ENCODE measurements at regions of chr4 and their contacts with region 1.

Region 1: GRCh38 chr4:140851032-140851636 is 94.9 kb upstream of the TBC1D9 start:
- DNase-seq: peak; percentile 69
- H3K4me3 ChIP-seq: no peak overlapping the region
- H3K27ac ChIP-seq: no peak overlapping the region
- H3K4me1 ChIP-seq: no peaks in the 10 kb centered on the region
- H3K27me3 ChIP-seq: peaks cover 2 to 9% of the 10 kb centered on the region in 2 experiments
- CTCF ChIP-seq: peak; percentile 65 to 69
- POLR2A ChIP-seq: no peak

Region 2: GRCh38 chr4:139509727-139510410 is 1341.3 kb before region 1 on chr4:
- CTCF ChIA-PET with region 1: no interaction called
- POLR2A ChIA-PET with region 1: no interaction called
- dilution Hi-C with region 1: no loop called
- intact Hi-C with region 1: no loop called
- DNase-seq: peak; percentile 45
- H3K4me3 ChIP-seq: no peak overlapping the region
- H3K27ac ChIP-seq: no peak overlapping the region
- H3K4me1 ChIP-seq: peaks cover 7% of the 10 kb centered on the region
- H3K27me3 ChIP-seq: no peaks in the 10 kb centered on the region
- CTCF ChIP-seq: peak; percentile 16 to 38
- POLR2A ChIP-seq: no peak

Region 3: GRCh38 chr4:140427106-140427961 is 423.8 kb before region 1 on chr4 and contains the start of gene CLGN:
- CTCF ChIA-PET with region 1: interaction called, 27 read pairs
- POLR2A ChIA-PET with region 1: no interaction called
- dilution Hi-C with region 1: no loop called
- intact Hi-C with region 1: loop called (anchors 1 kb)
- DNase-seq: peak; percentile 78
- H3K4me3 ChIP-seq: peak within 1 kb of the TSS; percentile 30 to 64 (median 48)
- H3K27ac ChIP-seq: no peak within 1 kb of the TSS
- H3K4me1 ChIP-seq: peaks cover 9% of the 10 kb centered on the region
- H3K27me3 ChIP-seq: peaks cover 14 to 34% of the 10 kb centered on the region in 2 experiments
- CTCF ChIP-seq: peak; percentile 58 to 68
- POLR2A ChIP-seq: no peak
- total RNA-seq, gene CLGN: 0.60 and 1.00 TPM in 2 replicates

Region 4: GRCh38 chr4:140595065-140595464 is 256.1 kb before region 1 on chr4:
- CTCF ChIA-PET with region 1: interaction called, 49 read pairs
- POLR2A ChIA-PET with region 1: no interaction called
- dilution Hi-C with region 1: no loop called
- intact Hi-C with region 1: loop called (anchors 1 kb)
- DNase-seq: peak; percentile 21
- H3K4me3 ChIP-seq: no peak overlapping the region
- H3K27ac ChIP-seq: no peak overlapping the region
- H3K4me1 ChIP-seq: no peaks in the 10 kb centered on the region
- H3K27me3 ChIP-seq: peaks cover 6 to 19% of the 10 kb centered on the region in 2 experiments
- CTCF ChIP-seq: peak; percentile 35 to 47
- POLR2A ChIP-seq: no peak

Region 5: GRCh38 chr4:140626661-140627376 is 224.3 kb before region 1 on chr4:
- CTCF ChIA-PET with region 1: interaction called, 18 read pairs
- POLR2A ChIA-PET with region 1: no interaction called
- dilution Hi-C with region 1: no loop called
- intact Hi-C with region 1: loop called (anchors 1 kb)
- DNase-seq: peak; percentile 59
- H3K4me3 ChIP-seq: no peak overlapping the region
- H3K27ac ChIP-seq: no peak overlapping the region
- H3K4me1 ChIP-seq: no peaks in the 10 kb centered on the region
- H3K27me3 ChIP-seq: no peaks in the 10 kb centered on the region
- CTCF ChIP-seq: no peak
- POLR2A ChIP-seq: no peak

Region 6: DNA sequence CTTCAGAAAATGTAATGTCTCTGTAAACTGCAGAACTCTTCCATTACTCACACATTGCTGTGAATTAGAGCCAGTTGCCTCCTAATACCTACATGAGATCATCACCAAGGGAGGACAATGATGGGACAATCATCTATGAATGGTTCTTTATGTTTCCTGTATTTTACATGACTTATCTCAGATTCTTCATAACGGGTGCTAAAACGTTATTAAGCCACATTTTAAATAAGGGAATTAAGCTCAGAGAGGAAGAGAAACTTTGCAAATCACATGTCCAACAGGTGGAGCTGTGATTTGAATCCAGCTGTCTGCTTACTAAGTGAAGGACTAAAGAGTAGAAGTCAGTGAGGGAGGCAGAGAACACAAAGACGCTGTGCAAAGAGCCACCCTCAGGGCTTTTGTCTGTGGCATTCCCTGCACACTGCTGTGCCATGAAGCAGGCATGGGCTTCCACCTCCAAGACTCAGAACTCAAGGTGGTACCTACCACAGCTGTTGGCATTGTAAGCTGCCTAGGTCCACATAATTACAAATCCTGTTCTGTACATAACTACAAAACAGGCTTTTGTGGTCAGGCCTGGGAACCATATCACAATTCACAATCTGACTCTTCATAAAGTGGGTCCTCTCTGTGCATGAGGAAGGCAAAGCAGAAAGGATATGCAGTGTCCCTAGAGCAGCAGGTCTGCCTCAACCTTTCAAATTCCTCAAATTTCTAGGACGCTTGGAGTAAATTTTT is 107.8 kb before region 1 on chr4:
- CTCF ChIA-PET with region 1: interaction called, 12 read pairs
- POLR2A ChIA-PET with region 1: no interaction called
- dilution Hi-C with region 1: no loop called
- intact Hi-C with region 1: no loop called
- DNase-seq: peak; percentile 59
- H3K4me3 ChIP-seq: no peak overlapping the region
- H3K27ac ChIP-seq: peak overlapping the region; percentile 15
- H3K4me1 ChIP-seq: peaks cover 20% of the 10 kb centered on the region
- H3K27me3 ChIP-seq: no peaks in the 10 kb centered on the region
- CTCF ChIP-seq: peak in 1 of 2 donors; percentile 26
- POLR2A ChIP-seq: no peak

Region 7: GRCh38 chr4:140884431-140885058 is 33.4 kb after region 1 on chr4:
- CTCF ChIA-PET with region 1: interaction called, 11 read pairs
- POLR2A ChIA-PET with region 1: no interaction called
- dilution Hi-C with region 1: no loop called
- intact Hi-C with region 1: no loop called
- DNase-seq: peak; percentile 68
- H3K4me3 ChIP-seq: no peak overlapping the region
- H3K27ac ChIP-seq: no peak overlapping the region
- H3K4me1 ChIP-seq: no peaks in the 10 kb centered on the region
- H3K27me3 ChIP-seq: peaks cover 8 to 10% of the 10 kb centered on the region in 2 experiments
- CTCF ChIP-seq: peak; percentile 65 to 74
- POLR2A ChIP-seq: no peak

Region 8: GRCh38 chr4:140955641-140956040 is 104.5 kb after region 1 on chr4:
- CTCF ChIA-PET with region 1: no interaction called
- POLR2A ChIA-PET with region 1: no interaction called
- dilution Hi-C with region 1: no loop called
- intact Hi-C with region 1: no loop called
- DNase-seq: no peak
- H3K4me3 ChIP-seq: no peak overlapping the region
- H3K27ac ChIP-seq: no peak overlapping the region
- H3K4me1 ChIP-seq: no peaks in the 10 kb centered on the region
- H3K27me3 ChIP-seq: no peaks in the 10 kb centered on the region
- CTCF ChIP-seq: no peak
- POLR2A ChIP-seq: no peak

Measured in endothelial cell of umbilical vein (primary cell).